ENCODE measurements at regions of chr5 and their contacts with region 1.

Region 1: GRCh38 chr5:54443270-54443669 is 12.2 kb upstream of the HSPB3 start:
- DNase-seq: peak; percentile 51
- H3K4me3 ChIP-seq: no peak overlapping the region
- H3K27ac ChIP-seq: no peak overlapping the region
- H3K4me1 ChIP-seq: no peaks in the 10 kb centered on the region
- H3K27me3 ChIP-seq: peaks cover 14 to 15% of the 10 kb centered on the region in 2 experiments
- CTCF ChIP-seq: peak; percentile 43 to 44
- POLR2A ChIP-seq: no peak

Region 2: GRCh38 chr5:53786468-53786867 is 656.8 kb before region 1 on chr5:
- CTCF ChIA-PET with region 1: no interaction called
- POLR2A ChIA-PET with region 1: no interaction called
- dilution Hi-C with region 1: no loop called
- intact Hi-C with region 1: no loop called
- DNase-seq: no peak
- H3K4me3 ChIP-seq: no peak overlapping the region
- H3K27ac ChIP-seq: no peak overlapping the region
- H3K4me1 ChIP-seq: no peaks in the 10 kb centered on the region
- H3K27me3 ChIP-seq: peaks cover 0 to 10% of the 10 kb centered on the region in 2 experiments
- CTCF ChIP-seq: no peak
- POLR2A ChIP-seq: no peak

Region 3: GRCh38 chr5:54480296-54480695 is 37.0 kb after region 1 on chr5:
- CTCF ChIA-PET with region 1: no interaction called
- POLR2A ChIA-PET with region 1: no interaction called
- dilution Hi-C with region 1: no loop called
- intact Hi-C with region 1: loop called (anchors 5 kb)
- DNase-seq: no peak
- H3K4me3 ChIP-seq: no peak overlapping the region
- H3K27ac ChIP-seq: no peak overlapping the region
- H3K4me1 ChIP-seq: no peaks in the 10 kb centered on the region
- H3K27me3 ChIP-seq: peaks cover 12% of the 10 kb centered on the region in 2 experiments
- CTCF ChIP-seq: no peak
- POLR2A ChIP-seq: no peak

Region 4: DNA sequence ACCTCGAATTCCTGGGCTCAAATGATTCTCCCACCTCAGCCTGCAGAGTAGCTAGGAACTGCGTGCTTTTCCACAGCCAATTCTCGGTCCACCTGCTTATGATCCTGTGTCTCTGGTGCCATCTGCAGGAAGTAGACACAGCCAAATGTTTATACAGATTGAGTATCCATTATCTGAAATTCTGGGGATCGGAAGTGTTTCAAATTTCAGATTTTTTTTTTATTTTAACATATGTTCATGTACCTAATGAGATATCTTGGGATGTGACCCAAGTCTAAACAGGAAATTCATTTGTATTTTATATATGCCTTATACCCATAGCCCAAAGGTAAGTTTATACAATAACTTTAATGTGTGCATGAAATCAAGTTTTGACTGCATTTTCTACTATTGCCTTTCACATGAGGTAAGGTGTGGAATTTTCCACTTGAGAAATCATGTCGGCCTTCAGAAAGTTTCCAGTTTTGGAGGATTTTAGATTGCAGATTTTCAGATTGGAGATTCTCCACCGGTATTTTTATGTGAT is 452.6 kb after region 1 on chr5:
- CTCF ChIA-PET with region 1: interaction called, 8 read pairs
- POLR2A ChIA-PET with region 1: no interaction called
- dilution Hi-C with region 1: no loop called
- intact Hi-C with region 1: loop called (anchors 1 kb)
- DNase-seq: peak; percentile 40
- H3K4me3 ChIP-seq: no peak overlapping the region
- H3K27ac ChIP-seq: no peak overlapping the region
- H3K4me1 ChIP-seq: peaks cover 1% of the 10 kb centered on the region
- H3K27me3 ChIP-seq: peaks cover 0 to 2% of the 10 kb centered on the region in 2 experiments
- CTCF ChIP-seq: peak; percentile 7 to 10
- POLR2A ChIP-seq: no peak